ENCODE measurements at regions of chr2 and their contacts with region 1.

Region 1: DNA sequence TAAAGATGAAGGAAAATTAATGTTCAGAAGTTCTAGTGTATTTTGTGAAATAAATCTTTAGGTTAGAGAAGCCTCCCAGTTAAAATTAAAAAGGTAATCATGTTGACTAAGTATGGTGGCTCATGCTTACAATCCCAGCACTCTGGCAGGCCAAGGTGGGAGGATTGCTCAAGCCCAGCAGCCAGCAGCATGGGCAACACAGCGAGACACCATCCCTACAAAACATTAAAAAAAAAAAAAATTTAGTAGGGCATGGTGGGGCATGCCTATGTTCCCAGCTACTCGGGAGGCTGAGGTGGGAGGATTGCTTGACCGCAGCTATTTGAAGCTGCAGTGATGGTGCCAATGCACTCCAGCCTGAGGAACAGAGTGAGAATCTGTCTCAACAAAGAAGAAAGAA is 17.9 kb downstream of the XPO1 start:
- DNase-seq: no peak
- H3K27ac ChIP-seq: peak overlapping the region; percentile 62
- CTCF ChIP-seq: no peak

Region 2: GRCh38 chr2:61460163-61460562 is 60.1 kb before region 1 on chr2:
- CTCF ChIA-PET with region 1: no interaction called
- POLR2A ChIA-PET with region 1: interaction called, 18 read pairs
- DNase-seq: peak; percentile 39
- H3K27ac ChIP-seq: peak overlapping the region; percentile 69
- CTCF ChIP-seq: no peak

Measured in RWPE1 (cell line).